SK-N-SH (cell line): ENCODE measurements at regions of chr6 and their contacts with region 1.

Region 1: GRCh38 chr6:108798670-108799353 is 49.4 kb upstream of the ARMC2 start:
- DNase-seq: peak; percentile 73
- H3K4me3 ChIP-seq: no peak overlapping the region; a peak in 1 of 4 replicates
- H3K27ac ChIP-seq: peak overlapping the region in 1 of 2 experiments; percentile 100; a peak in 2 of 4 replicates
- H3K4me1 ChIP-seq: peaks cover 0 to 63% of the 10 kb centered on the region in 2 experiments; a peak in 2 of 4 replicates
- H3K27me3 ChIP-seq: no peaks in the 10 kb centered on the region
- CTCF ChIP-seq: no peak
- EP300 ChIP-seq: peak in 1 of 2 experiments; percentile 98; a peak in 2 of 4 replicates
- RAD21 ChIP-seq: peak; percentile 23

Region 2: DNA sequence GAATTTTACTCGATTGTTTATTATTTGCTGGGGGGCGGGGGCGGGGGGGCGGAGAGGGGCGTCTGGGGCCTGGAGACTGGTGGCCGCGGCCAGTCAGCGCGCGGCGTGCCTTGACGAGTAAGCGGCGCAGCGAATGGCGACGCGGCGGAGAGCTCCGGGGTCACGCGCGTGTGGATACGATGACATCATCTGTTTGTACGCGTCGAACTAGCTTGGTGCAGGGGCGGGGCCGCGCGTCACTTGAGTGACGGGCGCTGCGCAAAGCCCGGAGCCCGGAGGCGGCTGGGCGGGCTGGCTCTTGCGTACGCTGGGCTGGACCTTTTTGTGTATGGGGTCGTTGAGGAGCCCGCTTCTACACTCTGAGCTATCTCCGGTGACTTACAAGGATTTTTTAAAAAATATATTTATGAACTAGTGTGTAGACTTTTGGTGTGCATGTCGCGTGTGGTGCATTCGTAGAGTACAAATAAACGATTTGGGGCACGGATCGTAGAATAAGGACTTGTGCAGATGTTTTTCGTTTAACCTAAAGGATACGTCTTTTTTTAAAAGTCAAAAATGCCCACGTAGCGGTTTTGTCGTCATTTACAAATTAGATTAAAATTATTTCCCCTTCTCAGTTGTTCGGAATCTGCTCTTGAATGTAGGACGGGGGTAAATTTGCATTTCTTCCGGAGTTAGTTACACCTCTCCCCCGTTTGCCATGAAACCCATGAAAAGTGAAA is 240.3 kb before region 1 on chr6:
- CTCF ChIA-PET with region 1: interaction called, 4 read pairs
- POLR2A ChIA-PET with region 1: interaction called, 69 read pairs
- DNase-seq: peak; percentile 89
- H3K4me3 ChIP-seq: peak overlapping the region; percentile 91 to 96
- H3K27ac ChIP-seq: peak overlapping the region; percentile 97 to 98
- H3K4me1 ChIP-seq: peaks cover 0 to 20% of the 10 kb centered on the region in 2 experiments; a peak in 2 of 4 replicates
- H3K27me3 ChIP-seq: no peaks in the 10 kb centered on the region
- CTCF ChIP-seq: no peak
- EP300 ChIP-seq: no peak
- RAD21 ChIP-seq: peak; percentile 29; the same call in 1 of the 2 replicates

Region 3: DNA sequence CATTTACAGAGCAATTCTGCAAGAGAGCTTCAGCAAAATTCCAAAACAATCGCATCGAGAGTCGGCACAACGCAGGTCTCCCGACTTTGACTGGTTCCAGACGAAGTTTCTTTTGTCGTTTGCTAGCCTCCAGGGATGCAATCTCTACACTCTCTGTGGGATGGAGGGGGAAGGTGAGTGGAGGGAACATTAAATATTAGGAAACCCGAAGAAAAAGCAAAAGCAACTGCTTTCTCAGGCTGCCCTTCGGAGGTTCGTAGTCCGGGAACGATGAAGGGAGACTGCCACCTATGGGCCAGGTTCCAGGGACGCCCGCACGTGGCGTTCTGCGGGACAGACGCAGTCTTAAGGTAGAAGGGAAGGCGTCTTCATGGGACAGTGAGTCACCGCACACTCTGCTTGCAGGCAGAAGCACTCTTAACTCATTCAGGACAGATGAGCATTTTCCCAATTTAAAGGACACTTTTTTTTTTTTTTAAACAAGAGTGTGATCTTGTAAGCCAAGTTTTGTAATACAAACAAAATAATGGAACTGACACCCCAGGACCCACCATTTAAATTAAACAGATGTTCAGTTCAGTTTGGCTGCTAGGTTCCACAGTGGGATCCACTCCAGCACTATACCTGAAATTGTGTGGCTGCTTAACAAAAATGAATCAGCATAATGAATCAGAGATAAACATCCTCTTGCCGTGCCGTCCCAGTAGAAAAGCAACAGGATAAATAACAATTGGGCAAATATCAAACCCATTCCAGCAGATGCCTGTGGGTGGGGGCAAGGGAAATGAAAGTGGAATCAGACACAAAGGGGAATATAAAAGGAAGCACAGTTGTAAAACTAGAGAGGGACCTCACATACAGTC is 16.4 kb before region 1 on chr6:
- CTCF ChIA-PET with region 1: interaction called, 16 read pairs
- POLR2A ChIA-PET with region 1: no interaction called
- DNase-seq: peak; percentile 88
- H3K4me3 ChIP-seq: peak overlapping the region; percentile 43 to 65
- H3K27ac ChIP-seq: peak overlapping the region in 1 of 2 experiments; percentile 29; a peak in 2 of 4 replicates
- H3K4me1 ChIP-seq: peaks cover 8 to 14% of the 10 kb centered on the region in 2 experiments; a peak in 3 of 4 replicates
- H3K27me3 ChIP-seq: no peaks in the 10 kb centered on the region
- CTCF ChIP-seq: peak; percentile 86
- EP300 ChIP-seq: no peak
- RAD21 ChIP-seq: peak; percentile 95

Region 4: DNA sequence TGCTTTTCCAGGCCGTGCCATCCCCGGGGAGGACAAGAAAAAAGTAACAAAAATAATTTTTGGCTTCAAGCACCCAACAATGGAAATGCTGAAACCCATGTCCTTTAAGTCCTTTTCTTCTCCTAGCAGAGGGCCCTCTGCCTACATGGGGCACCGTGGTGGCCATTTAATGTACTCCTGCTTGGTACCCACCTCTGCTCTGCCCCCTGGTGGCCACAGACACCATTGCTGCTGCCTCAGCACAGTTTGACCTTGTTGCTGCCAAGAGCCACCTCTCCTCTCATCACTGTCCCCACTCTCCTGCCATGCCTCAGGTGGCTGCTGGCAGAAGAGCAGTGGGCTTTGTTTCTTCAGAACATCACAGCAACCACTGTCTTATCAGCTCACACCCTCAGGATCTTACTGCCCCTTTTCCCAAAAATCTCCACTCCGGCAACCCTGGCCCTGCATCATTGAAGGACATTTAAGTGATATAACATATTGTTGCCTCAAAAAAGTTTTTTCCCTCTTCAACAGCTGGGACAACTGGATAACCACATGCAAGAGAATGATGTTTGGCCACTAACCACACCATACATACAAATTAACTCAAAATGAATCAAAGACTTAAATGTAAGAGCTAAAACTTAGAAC is 36.5 kb after region 1 on chr6:
- CTCF ChIA-PET with region 1: interaction called, 17 read pairs
- POLR2A ChIA-PET with region 1: no interaction called
- DNase-seq: peak; percentile 89
- H3K4me3 ChIP-seq: no peak overlapping the region; a peak in 1 of 4 replicates
- H3K27ac ChIP-seq: peak overlapping the region in 1 of 2 experiments; percentile 62; a peak in 2 of 4 replicates
- H3K4me1 ChIP-seq: peaks cover 0 to 13% of the 10 kb centered on the region in 2 experiments; a peak in 2 of 4 replicates
- H3K27me3 ChIP-seq: no peaks in the 10 kb centered on the region
- CTCF ChIP-seq: peak; percentile 93
- EP300 ChIP-seq: no peak
- RAD21 ChIP-seq: peak; percentile 91

Region 5: GRCh38 chr6:108848116-108848868 is 49.5 kb after region 1 on chr6 and contains the start of gene ARMC2:
- CTCF ChIA-PET with region 1: interaction called, 4 read pairs
- POLR2A ChIA-PET with region 1: interaction called, 11 read pairs
- DNase-seq: peak; percentile 98
- H3K4me3 ChIP-seq: peak within 1 kb of the TSS; percentile 89 to 92
- H3K27ac ChIP-seq: peak within 1 kb of the TSS; percentile 77 to 87
- H3K4me1 ChIP-seq: peaks cover 0 to 7% of the 10 kb centered on the region in 2 experiments; a peak in 3 of 4 replicates
- H3K27me3 ChIP-seq: no peaks in the 10 kb centered on the region
- CTCF ChIP-seq: no peak
- EP300 ChIP-seq: no peak
- RAD21 ChIP-seq: no peak
- polyA plus RNA-seq, gene ARMC2: 2.4 and 4.3 TPM in 2 replicates